ENCODE measurements at regions of chr11 and their contacts with region 1.

Region 1: GRCh38 chr11:123103326-123103980 is 41.5 kb upstream of the HSPA8 start:
- DNase-seq: peak; percentile 79
- H3K4me3 Mint-ChIP-seq: no peak overlapping the region
- H3K27ac Mint-ChIP-seq: no peak overlapping the region
- H3K4me1 Mint-ChIP-seq: peaks cover 21% of the 10 kb centered on the region
- H3K27me3 Mint-ChIP-seq: peaks cover 6% of the 10 kb centered on the region

Region 2: DNA sequence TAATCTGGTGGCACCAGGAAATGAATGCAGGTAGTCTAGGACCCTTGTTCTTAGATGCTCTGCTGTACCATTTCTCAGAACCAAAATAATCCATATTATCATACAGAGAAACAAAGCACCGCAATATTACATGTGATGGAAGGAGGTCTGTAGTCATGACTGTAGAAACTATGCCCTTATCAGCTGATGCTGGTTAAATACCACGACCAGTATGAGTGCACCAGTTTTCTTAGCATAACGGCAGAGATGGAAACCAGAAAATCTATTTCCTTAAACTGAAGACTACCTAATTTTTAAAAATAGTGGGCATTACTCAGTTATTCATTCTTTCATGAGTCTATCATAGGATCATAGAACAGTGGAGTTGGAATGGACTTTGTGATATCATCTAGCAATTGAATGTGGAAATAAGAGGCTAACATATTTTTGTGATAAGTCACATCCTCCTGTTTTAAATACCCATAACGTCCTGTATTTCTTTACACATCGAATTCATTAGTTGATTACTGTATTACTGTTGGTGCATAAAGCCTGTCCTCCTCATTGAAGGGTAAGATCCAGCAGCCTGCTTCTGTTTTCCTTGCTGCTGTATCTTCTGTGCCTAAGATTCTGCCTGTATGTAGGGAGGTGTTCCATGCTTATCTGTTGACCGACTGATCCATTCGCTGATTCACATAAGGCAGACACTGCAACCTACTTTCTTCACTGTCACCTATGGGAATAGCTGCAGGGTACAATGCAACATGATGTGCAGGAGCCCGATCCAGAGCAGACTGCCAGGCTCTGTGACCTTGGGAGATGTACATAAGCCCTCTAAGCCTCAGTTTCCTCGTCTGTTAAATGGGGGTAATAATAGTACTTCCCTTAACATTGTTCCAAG is 205.6 kb before region 1 on chr11:
- intact Hi-C with region 1: no loop called
- DNase-seq: no peak
- H3K4me3 Mint-ChIP-seq: no peak overlapping the region
- H3K27ac Mint-ChIP-seq: no peak overlapping the region
- H3K4me1 Mint-ChIP-seq: peaks cover 2% of the 10 kb centered on the region
- H3K27me3 Mint-ChIP-seq: peaks cover 2% of the 10 kb centered on the region

Region 3: DNA sequence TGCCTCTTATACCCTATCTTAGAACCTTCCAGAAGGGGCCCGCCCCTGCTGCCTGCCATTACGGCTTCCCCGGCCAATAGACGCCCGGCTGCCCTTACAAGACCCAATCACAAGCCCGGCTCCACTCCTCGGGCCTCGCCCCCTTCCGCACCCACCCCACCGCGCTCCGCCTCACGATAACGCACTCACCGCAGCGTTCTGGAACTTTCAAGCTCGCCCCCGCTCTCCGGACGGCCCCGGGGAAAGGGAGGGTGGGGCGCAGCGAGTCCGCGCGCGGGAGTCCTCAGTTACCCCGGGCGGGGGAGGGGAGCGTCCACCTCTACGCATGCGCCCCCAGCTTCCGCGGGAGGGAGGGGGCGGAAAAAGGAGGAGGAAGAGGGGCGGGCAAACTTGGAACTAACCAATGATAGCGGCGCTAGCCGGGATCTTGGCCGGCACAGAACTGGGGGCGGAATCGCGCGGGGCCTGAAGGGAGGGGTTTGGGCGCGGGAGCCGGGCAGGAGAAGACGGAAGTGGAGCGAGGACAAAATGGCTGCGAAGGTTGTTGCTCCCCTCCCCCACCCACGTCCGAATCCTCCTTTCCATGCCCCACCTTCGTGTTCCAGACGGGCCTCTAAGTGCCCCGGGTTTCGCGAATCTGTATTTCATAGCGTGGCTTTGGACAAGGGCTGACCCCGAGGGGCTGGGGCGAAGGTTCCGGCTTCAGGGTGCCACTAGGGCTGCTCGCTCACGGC is 41.1 kb before region 1 on chr11:
- intact Hi-C with region 1: loop called (anchors 5 kb)
- DNase-seq: peak; percentile 100
- H3K4me3 Mint-ChIP-seq: peak overlapping the region; percentile 100
- H3K27ac Mint-ChIP-seq: peak overlapping the region; percentile 99
- H3K4me1 Mint-ChIP-seq: peaks cover 46% of the 10 kb centered on the region
- H3K27me3 Mint-ChIP-seq: peaks cover 1% of the 10 kb centered on the region

Region 4: GRCh38 chr11:123069908-123070821 is 33.3 kb before region 1 on chr11:
- intact Hi-C with region 1: loop called (anchors 2 kb)
- DNase-seq: peak; percentile 83
- H3K4me3 Mint-ChIP-seq: peak overlapping the region; percentile 90
- H3K27ac Mint-ChIP-seq: peak overlapping the region; percentile 99
- H3K4me1 Mint-ChIP-seq: peaks cover 54% of the 10 kb centered on the region
- H3K27me3 Mint-ChIP-seq: no peaks in the 10 kb centered on the region